ENCODE measurements at regions of chr21 and their contacts with region 1.

Region 1: DNA sequence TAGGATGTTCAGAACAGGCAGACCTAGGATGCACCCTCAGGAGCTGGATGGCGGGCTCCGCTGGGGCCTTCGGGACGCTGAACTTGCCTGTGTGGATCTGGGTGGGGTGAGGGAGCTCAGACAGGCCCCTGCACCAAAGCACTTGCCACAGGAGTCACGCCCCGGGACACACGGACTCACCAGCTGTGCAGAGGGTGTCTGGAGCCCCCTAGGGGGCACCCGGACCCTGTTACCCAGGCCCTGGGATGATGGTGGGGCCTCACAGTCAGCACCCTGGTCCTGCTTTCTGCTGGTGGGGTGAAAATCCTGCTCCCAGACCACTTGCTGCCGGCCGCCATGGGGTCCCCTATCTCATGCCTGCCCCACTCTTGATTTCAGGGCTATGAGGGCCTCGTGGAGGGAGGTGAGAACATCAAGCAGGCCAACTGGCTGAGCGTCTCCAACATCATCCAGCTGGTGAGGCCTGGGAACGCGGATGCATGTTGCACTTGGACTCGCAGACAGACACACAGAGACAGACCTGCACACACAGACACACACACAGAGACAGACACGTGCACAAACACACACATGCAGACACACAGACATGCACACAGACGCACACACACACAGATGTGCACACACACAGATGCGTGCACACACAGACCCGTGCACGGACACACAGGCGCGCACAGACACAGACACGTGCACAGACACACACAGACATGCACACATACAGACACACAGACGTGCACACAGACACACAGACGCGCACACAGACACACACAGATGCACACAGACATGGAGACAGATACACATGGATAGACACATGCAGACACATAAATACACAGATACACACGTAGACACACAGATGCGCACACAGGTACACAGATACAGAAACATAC is 11.0 kb downstream of the PFKL start:
- DNase-seq: no peak
- ATAC-seq: no peak
- H3K4me3 ChIP-seq: no peak overlapping the region
- H3K27ac ChIP-seq: no peak overlapping the region
- H3K4me1 ChIP-seq: peaks cover 0 to 11% (median 0%) of the 10 kb centered on the region in 12 donors
- H3K27me3 ChIP-seq: no peaks in the 10 kb centered on the region
- CTCF ChIP-seq: no peak
- POLR2A ChIP-seq: no peak

Region 2: GRCh38 chr21:43991447-43991991 is 319.4 kb before region 1 on chr21:
- intact Hi-C with region 1: loop called in 1 of 10 experiments (anchors 10 kb)
- DNase-seq: no peak
- ATAC-seq: peak in 1 of 4 donors; percentile 7
- H3K4me3 ChIP-seq: no peak overlapping the region
- H3K27ac ChIP-seq: no peak overlapping the region
- H3K4me1 ChIP-seq: peaks cover 0 to 17% (median 5%) of the 10 kb centered on the region in 12 donors
- H3K27me3 ChIP-seq: no peaks in the 10 kb centered on the region
- CTCF ChIP-seq: no peak
- POLR2A ChIP-seq: no peak

Region 3: DNA sequence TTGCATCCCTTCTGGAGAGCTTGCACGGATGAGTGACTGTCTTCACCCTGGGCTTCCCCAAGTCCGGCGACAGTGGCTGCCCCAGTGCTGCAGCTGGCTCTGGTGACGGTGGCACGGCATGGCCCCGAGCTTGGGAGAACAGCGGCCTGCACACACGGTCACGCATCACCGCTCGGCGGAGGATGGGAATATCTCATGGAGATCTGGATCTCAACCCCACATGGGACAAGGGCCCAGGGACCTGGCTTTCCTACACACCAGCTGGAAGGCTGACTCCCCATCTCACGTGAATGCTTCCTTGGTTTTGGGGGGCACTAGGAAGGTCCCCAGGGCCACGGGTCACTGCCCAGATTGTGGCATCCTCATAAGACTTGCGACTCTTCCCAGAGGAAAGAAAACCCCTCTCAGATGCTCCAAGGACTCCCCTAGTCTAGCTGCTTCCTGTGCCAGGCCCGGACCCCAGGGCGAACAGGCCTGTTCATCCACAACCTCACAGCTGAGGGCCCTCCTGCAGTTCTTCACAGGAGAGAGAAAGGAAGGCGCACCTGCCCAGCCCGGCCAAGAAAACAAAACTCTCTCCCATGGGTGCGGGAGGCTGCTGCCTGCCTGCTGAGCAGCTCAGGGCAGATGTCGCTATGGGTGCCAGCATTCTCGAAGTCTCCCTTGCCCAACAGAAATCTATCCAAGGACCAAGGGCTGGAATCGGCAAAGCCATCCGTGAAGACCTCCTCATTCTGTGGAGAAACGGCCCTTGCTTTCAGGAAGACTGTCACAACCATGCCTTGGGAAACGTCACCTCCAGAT is 18.4 kb after region 1 on chr21:
- intact Hi-C with region 1: loop called in 1 of 10 experiments (anchors 2 kb)
- DNase-seq: no peak
- ATAC-seq: no peak
- H3K4me3 ChIP-seq: no peak overlapping the region
- H3K27ac ChIP-seq: no peak overlapping the region
- H3K4me1 ChIP-seq: no peaks in the 10 kb centered on the region
- H3K27me3 ChIP-seq: no peaks in the 10 kb centered on the region
- CTCF ChIP-seq: no peak
- POLR2A ChIP-seq: no peak

Region 4: GRCh38 chr21:44338971-44339910 is 28.4 kb after region 1 on chr21 and contains the start of gene CFAP410:
- intact Hi-C with region 1: loop called in 1 of 10 experiments (anchors 2 kb)
- DNase-seq: peak; percentile 93 to 97 (median 95)
- ATAC-seq: peak; percentile 90 to 95 (median 94)
- H3K4me3 ChIP-seq: peak within 1 kb of the TSS; percentile 43 to 94 (median 86)
- H3K27ac ChIP-seq: peak within 1 kb of the TSS; percentile 90 to 100 (median 98)
- H3K4me1 ChIP-seq: peaks cover 3 to 19% (median 14%) of the 10 kb centered on the region in 12 donors
- H3K27me3 ChIP-seq: no peaks in the 10 kb centered on the region
- CTCF ChIP-seq: no peak
- POLR2A ChIP-seq: peak; percentile 12 to 96
- total RNA-seq, gene CFAP410: 10.4 to 31.6 (median 15.3) TPM

Region 5: GRCh38 chr21:44370027-44370735 is 59.3 kb after region 1 on chr21:
- intact Hi-C with region 1: loop called in 1 of 10 experiments (anchors 10 kb)
- DNase-seq: peak in 1 of 5 donors; percentile 4
- ATAC-seq: peak in 2 of 4 donors; percentile 30 to 31
- H3K4me3 ChIP-seq: peak overlapping the region in 2 of 12 donors; percentile 7 to 16
- H3K27ac ChIP-seq: no peak overlapping the region
- H3K4me1 ChIP-seq: peaks cover 0 to 10% (median 0%) of the 10 kb centered on the region in 12 donors
- H3K27me3 ChIP-seq: peaks cover 0 to 35% (median 15%) of the 10 kb centered on the region in 9 donors
- CTCF ChIP-seq: no peak
- POLR2A ChIP-seq: no peak

Measured in heart left ventricle (tissue), 16 donors.